Common myeloid progenitor, CD34-positive (primary cell): ENCODE measurements at regions of chr6 and their contacts with region 1.

Region 1: GRCh38 chr6:36615018-36615761 is 21.0 kb downstream of the SRSF3 start:
- DNase-seq: peak; percentile 61 to 83 (median 77)
- H3K4me3 ChIP-seq: no peak overlapping the region
- H3K27ac ChIP-seq: no peak overlapping the region
- H3K4me1 ChIP-seq: peaks cover 0 to 11% (median 3%) of the 10 kb centered on the region in 4 experiments
- H3K27me3 ChIP-seq: no peaks in the 10 kb centered on the region

Region 2: GRCh38 chr6:36678518-36679027 is 63.4 kb after region 1 on chr6 and contains the start of gene CDKN1A:
- CTCF ChIA-PET with region 1: interaction called, 29 read pairs
- POLR2A ChIA-PET with region 1: no interaction called
- DNase-seq: peak; percentile 70 to 86 (median 84)
- H3K4me3 ChIP-seq: peak within 1 kb of the TSS; percentile 23 to 87 (median 76)
- H3K27ac ChIP-seq: peak within 1 kb of the TSS in 1 of 2 experiments; percentile 49
- H3K4me1 ChIP-seq: peaks cover 10 to 68% (median 44%) of the 10 kb centered on the region in 4 experiments
- H3K27me3 ChIP-seq: peaks cover 0 to 32% (median 0%) of the 10 kb centered on the region in 5 experiments

Region 3: GRCh38 chr6:36724514-36725390 is 109.6 kb after region 1 on chr6:
- CTCF ChIA-PET with region 1: interaction called, 27 read pairs
- POLR2A ChIA-PET with region 1: no interaction called
- DNase-seq: peak; percentile 47 to 61 (median 50)
- H3K4me3 ChIP-seq: no peak overlapping the region
- H3K27ac ChIP-seq: no peak overlapping the region
- H3K4me1 ChIP-seq: peaks cover 0 to 17% (median 0%) of the 10 kb centered on the region in 4 experiments
- H3K27me3 ChIP-seq: no peaks in the 10 kb centered on the region

Region 4: DNA sequence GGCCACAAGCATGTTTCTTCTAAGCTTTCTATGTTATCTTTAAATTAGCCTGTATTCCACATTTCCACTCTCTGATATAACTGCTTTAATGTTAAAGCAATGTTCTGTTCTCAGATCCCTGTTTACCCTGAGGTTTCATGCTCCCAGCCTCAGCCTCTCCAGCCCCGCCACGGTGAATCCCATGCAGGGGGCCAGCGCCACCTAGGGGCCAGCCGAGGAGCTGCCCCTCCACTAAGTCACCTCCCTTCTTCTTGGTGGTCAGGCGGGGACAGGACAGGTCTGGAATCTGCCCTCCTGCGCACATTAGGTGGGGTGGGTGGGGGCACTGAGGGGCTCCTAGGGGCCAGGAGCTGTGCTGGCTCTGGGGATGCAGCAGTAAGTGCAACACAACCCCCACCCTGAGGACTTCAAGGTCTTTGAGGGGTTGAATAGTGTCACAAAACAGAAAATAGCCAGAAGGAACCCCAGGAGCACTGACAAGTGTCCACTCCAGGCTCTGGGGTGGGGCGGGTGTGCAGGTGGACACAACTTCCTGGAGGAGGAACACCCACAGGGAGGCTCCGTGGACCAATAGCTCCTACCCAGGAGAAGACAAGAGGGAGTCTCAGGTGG is 144.1 kb after region 1 on chr6:
- CTCF ChIA-PET with region 1: interaction called, 71 read pairs
- POLR2A ChIA-PET with region 1: no interaction called
- DNase-seq: peak; percentile 67 to 82 (median 77)
- H3K4me3 ChIP-seq: no peak overlapping the region
- H3K27ac ChIP-seq: no peak overlapping the region
- H3K4me1 ChIP-seq: peaks cover 0 to 24% (median under 1%) of the 10 kb centered on the region in 4 experiments
- H3K27me3 ChIP-seq: no peaks in the 10 kb centered on the region